ENCODE measurements at regions of chr20 and their contacts with region 1.

Region 1: DNA sequence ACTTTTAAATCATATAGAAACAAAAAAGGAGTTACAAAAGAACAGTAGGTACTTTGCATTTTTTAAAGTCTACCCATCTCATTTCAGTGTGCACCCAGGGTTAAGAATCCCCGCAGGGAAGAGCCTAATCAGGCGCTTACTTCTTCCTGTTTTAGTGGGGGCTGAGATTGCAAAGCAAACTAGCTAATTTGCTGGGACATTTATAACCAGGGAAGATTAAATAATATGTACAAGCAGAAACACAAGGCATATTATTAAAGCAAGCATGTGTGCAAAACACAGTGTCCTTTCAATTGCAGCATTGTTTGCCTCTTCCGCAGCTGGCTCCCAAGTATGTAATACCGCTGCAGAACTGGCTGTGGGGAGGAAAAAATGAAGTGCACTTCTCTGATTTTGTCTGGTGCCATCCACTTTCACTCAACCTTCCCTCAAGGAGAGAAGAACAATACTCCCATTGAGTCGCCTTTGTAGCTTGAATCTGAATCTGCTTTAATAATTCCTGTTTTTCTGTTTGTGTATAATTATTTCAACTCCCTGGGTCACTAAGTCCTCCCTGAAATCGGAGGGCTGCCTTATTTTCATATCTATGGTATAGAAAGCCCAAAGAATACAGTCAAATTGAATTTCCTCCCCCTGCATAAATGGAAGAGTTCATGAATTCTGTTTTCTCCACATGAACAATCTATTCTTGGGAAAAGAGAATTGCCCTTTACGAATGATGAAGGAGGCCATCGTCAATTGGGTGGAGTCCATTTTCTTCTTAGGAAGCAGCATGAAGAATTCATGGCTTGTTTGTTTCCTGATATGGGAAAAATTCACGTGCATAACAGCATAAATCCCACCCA is 23.3 kb upstream of the BCAS1 start:
- DNase-seq: no peak
- CTCF ChIP-seq: no peak

Region 2: DNA sequence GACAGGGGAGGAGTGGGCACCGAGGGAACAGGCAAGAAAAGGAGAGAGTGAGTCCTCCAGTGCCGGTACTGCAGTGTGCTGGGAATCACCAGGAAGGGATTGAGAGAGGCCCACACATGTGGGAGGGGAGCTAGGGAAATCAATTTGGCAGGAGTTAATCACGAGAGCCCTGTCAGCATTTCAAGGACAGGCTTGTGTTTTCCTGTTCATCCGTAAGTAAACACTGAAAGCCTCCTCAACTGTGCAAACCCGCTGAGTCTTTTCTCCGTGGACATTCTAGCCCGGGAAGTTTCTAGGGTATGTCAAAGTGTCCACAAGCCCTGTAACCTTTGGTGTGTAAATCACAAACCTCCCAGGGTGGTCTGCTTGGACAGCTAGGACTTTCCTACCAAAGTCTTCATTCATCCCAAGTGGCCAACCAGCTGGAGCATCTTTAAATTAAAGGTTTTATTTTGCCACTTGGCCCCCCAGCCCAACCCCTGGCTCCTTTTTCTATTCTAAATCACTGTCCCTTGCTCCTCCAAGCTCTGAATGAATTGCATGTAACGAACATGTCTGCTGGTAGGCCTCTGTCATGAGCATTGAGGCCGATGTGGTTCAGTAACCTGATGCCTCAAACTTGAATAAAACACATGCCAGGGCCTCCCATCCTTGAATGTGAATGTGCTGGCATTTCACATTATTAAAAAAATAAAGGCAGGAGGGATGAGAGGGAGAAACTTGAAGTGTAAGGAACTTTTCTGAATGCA is 649.1 kb before region 1 on chr20:
- CTCF ChIA-PET with region 1: no interaction called
- POLR2A ChIA-PET with region 1: no interaction called
- DNase-seq: no peak
- CTCF ChIP-seq: no peak

Region 3: GRCh38 chr20:53972179-53972696 is 121.4 kb before region 1 on chr20:
- CTCF ChIA-PET with region 1: no interaction called
- POLR2A ChIA-PET with region 1: no interaction called
- DNase-seq: no peak
- CTCF ChIP-seq: no peak

Region 4: GRCh38 chr20:54076064-54076658 is 17.5 kb before region 1 on chr20:
- CTCF ChIA-PET with region 1: no interaction called
- POLR2A ChIA-PET with region 1: no interaction called
- DNase-seq: no peak
- CTCF ChIP-seq: no peak

Region 5: DNA sequence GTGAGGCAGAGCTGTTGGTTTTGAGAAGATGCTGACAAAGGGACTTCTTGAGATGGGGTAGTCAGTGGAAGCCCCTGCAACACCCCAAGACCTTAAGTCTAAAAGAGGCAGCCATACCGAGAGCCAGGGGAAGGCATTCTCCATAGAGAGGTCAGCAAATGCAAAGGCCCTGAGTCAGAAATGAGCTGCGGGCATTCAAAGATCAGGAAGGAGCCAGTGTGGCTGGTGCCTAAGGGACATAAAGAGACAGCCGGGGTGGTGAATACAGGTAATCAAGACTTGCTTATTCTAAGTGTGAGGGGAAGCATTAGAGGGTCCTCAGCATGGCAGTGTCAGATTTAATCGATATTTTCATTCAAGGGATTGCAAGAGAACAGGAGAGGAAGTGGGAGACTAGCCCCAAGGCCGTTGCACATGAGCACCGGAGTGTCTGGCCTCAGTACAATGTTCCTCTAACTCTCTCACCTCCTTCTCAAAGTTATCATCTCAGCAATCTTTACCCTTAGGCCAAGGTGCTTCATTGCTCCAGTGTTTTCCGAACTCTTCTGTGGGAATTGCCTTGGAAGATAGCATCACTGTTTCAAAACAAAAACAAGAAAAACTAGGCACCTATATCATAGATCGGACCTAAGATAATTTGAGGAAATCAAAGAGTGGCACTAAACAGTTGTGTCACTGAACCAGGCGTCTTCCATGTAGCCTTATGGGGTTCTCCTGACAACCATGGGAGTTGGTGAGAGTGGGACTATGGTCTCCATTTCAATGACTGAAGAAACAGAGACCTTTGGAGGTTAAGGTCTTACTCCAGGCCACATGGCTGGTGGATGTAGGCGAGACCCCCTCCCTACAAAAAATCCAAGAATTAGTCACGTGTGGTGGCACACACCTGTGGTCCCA is 555.0 kb after region 1 on chr20:
- CTCF ChIA-PET with region 1: interaction called, 19 read pairs
- POLR2A ChIA-PET with region 1: no interaction called
- DNase-seq: no peak
- CTCF ChIP-seq: no peak